Heart right ventricle (tissue), 16 donors: ENCODE measurements at regions of chr6 and their contacts with region 1.

Region 1: DNA sequence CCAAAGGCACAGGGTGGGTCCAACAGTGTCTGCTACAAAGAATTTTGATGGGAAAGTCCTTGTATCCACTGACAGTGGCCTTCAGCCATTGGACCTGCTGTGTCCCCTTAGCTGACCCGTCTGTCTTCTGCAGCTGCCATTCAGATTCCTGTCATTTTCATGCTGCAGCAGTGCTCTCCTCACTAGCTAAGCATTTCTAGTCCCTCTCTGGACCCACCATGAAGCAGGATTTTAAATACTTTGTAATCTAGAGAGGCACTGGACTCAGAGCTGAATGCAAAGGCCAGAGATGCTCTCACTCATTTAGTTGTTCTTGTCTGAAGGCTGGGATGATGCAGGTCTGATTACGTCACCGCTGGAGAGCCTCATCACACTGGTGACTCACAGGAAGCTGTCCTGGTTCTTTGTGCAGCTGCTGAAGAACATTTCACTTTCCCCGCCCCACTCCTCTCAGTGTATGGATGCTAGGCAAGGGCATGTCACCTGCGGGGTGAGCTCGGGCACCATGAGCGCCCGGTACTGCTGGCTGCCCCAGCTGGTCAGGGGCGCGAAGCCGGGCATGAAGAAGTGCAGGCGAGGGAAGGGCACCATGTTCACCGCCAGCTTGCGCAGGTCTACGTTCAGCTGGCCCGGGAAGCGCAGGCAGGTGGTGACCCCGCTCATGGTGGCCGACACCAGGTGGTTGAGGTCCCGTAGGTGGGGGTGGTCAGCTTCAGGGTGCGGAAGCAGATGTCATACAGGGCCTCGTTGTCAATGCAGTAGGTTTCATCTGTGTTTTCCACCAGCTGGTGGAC is 19.4 kb upstream of the TUBB2A start:
- DNase-seq: no peak
- ATAC-seq: peak in 6 of 8 donors; percentile 46 to 87 (median 63)
- H3K4me3 ChIP-seq: no peak overlapping the region
- H3K27ac ChIP-seq: no peak overlapping the region
- H3K4me1 ChIP-seq: no peaks in the 10 kb centered on the region
- H3K27me3 ChIP-seq: peaks cover 0 to 4% (median 0%) of the 10 kb centered on the region in 7 donors
- CTCF ChIP-seq: no peak

Region 2: DNA sequence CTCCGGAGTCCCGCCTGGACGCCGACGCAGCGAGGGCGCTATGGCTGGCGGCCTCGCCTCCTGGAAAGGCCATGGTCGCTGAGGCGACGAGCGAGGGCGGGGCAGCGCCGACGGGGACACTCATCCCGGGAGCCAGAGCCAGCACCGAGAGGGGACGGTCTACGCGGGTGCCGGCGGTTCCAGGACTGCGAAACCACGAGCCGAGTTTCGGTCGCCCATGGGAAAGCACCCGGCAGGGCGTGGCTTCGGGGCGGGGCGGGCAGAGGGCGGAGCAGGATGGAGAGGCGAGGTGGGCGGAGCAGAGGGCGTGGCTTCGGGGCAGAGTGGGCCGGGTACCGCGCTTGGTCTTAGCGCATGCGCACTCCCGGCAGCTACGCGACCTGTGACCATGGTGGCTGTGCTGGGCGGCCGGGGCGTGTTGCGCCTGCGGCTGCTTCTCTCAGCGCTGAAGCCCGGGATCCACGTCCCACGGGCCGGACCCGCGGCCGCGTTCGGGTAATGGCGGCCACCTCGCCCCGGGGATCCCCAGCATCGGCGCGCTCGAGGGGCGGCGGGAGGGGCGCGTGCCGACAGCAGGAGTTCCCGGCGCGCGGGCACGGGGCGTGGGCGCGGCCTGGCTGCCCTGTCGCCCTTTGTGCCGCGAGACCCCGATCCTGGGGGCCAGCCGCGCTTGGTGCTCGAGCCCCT is 58.3 kb before region 1 on chr6 and contains the start of gene BPHL:
- intact Hi-C with region 1: no loop called
- DNase-seq: peak; percentile 98 to 99
- ATAC-seq: peak; percentile 98 to 99 (median 99)
- H3K4me3 ChIP-seq: peak within 1 kb of the TSS; percentile 63 to 96 (median 79)
- H3K27ac ChIP-seq: peak within 1 kb of the TSS; percentile 75 to 96 (median 90)
- H3K4me1 ChIP-seq: peaks cover 0 to 18% (median 12%) of the 10 kb centered on the region in 9 donors
- H3K27me3 ChIP-seq: no peaks in the 10 kb centered on the region
- CTCF ChIP-seq: peak in 2 of 9 donors; percentile 9 to 23
- total RNA-seq, gene BPHL: 14.5 to 44.4 (median 21.0) TPM

Region 3: DNA sequence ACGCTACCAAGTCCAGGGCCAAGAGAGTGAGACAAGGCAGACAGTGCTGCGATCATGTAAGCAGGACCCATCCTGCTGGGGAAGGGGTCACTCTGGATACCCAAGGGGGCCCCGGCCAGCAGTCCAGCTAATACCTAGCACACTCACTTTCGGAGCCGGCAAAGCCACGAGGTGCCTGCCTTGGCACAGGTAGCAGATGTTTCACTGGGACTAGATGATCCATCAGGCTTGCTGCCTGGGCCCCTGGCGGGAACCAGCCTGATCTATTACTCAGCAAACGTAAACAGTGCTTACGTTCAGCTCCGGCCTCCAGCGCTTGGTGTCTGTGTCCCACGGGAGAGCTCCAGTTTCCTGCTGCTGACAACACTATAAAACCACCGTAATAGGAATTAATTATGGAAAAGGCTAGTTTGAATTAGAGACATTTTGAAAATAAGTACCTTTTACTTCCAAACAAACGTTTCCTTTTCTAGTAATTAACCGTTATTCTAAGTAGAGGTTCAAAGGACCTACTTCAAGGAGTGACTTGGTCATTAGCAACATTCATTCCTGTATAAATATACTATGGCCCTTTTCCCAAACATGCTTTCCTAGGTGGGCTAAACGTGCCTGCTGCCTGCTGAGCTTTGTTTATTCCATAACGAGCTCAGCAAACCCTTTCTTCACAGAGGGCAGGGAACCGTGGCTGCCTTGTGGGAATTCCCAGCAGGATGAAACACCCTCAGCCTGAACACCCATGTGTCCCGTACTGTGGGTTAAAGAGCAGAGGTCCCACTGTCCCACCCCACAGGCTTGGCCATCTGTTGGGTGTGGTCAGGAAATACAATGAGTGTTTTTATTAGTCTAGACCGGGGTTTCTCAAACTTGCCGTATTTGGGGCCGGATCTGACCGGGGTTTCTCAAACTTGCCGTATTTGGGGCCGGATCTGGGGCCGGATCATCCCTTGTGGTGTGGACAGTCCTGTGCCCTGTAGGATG is 261.7 kb after region 1 on chr6:
- intact Hi-C with region 1: loop called in 1 of 10 experiments (anchors 5 kb)
- DNase-seq: no peak
- ATAC-seq: peak in 4 of 8 donors; percentile 24 to 62 (median 50)
- H3K4me3 ChIP-seq: no peak overlapping the region
- H3K27ac ChIP-seq: peak overlapping the region in 1 of 10 donors; percentile 29
- H3K4me1 ChIP-seq: peaks cover 0 to 15% (median 0%) of the 10 kb centered on the region in 9 donors
- H3K27me3 ChIP-seq: no peaks in the 10 kb centered on the region
- CTCF ChIP-seq: no peak

Region 4: GRCh38 chr6:4093288-4093687 is 916.5 kb after region 1 on chr6:
- intact Hi-C with region 1: no loop called
- DNase-seq: no peak
- ATAC-seq: no peak
- H3K4me3 ChIP-seq: no peak overlapping the region
- H3K27ac ChIP-seq: no peak overlapping the region
- H3K4me1 ChIP-seq: no peaks in the 10 kb centered on the region
- H3K27me3 ChIP-seq: no peaks in the 10 kb centered on the region
- CTCF ChIP-seq: no peak